ENCODE measurements at regions of chr2 and their contacts with region 1.

Region 1: DNA sequence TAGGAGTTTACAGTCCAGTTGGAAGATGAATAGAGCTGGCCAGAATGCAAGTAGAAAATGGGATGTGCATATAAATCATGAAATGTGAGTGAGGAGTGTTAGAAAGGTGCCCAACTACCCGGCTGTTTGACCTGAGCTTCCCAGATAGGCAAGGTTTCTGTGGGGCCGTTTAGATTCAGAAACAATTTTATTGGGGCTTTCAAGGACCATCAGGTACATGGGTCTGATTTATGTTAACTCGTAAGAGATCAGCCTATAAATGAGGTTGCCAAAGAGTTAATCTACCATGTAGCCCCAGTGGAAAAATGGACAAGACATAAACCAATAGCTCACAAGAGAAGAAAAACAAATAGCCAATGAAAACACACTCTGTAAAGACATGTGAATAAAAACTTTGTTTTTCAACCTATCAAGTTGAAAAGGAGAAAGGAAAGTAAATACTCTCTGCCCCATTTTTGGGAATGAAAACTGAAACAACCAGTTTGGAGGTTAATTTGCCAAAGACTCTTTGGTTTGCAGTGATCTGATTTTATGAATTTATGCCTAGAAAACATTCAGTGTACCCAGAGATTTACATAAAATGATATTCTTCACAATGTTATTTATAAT is 77.4 kb downstream of the TMEM247 start:
- DNase-seq: no peak
- ATAC-seq: no peak
- H3K4me3 ChIP-seq: no peak overlapping the region
- H3K27ac ChIP-seq: no peak overlapping the region
- H3K4me1 ChIP-seq: no peaks in the 10 kb centered on the region
- H3K27me3 ChIP-seq: no peaks in the 10 kb centered on the region
- CTCF ChIP-seq: no peak

Region 2: DNA sequence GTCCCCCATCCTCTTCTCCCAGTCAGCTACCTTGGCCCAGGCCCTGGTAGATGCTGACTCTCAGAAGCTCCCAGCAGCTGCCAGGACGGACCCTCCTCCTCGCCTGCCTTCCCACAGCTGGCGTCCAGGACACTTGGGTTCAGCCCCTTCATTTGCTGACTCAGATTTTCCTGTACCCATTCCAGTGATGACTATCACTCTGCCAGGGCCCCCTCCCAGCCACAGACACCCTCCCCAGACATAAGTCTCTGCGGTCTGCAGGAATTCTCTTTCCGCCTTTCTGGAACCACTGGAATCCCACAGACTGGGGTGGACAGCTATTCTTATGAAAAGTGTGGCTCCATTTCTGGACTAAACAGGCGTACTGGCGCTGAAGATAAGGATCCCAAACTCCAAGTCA is 519.9 kb before region 1 on chr2:
- CTCF ChIA-PET with region 1: no interaction called
- POLR2A ChIA-PET with region 1: interaction called, 11 read pairs
- in situ Hi-C with region 1: no loop called
- intact Hi-C with region 1: no loop called
- DNase-seq: no peak
- ATAC-seq: no peak
- H3K4me3 ChIP-seq: no peak overlapping the region
- H3K27ac ChIP-seq: no peak overlapping the region
- H3K4me1 ChIP-seq: peaks cover 1% of the 10 kb centered on the region; the same call in 1 of the 2 replicates
- H3K27me3 ChIP-seq: no peaks in the 10 kb centered on the region
- CTCF ChIP-seq: no peak

Region 3: DNA sequence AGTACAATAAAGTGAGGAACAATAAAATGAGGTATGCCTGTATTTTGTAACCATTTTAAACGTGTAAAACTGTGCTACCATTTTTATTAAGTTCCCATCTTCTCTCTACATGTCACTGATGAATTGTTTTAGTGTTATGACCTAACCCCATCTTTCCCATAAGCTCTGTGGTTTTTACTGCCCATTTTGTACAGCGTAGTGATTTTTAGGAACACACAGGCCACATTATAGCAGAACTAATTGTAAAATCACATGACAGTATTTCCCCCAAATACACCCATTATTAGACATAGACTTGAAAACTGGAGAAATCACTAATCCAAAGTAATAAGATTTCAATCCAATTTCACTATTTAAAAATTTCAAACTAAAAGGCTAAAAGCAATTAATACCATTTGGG is 53.2 kb after region 1 on chr2:
- CTCF ChIA-PET with region 1: no interaction called
- POLR2A ChIA-PET with region 1: no interaction called
- in situ Hi-C with region 1: no loop called
- intact Hi-C with region 1: no loop called
- DNase-seq: no peak
- ATAC-seq: no peak
- H3K4me3 ChIP-seq: no peak overlapping the region
- H3K27ac ChIP-seq: no peak overlapping the region
- H3K4me1 ChIP-seq: no peaks in the 10 kb centered on the region
- H3K27me3 ChIP-seq: no peaks in the 10 kb centered on the region
- CTCF ChIP-seq: no peak

Region 4: GRCh38 chr2:46645681-46646162 is 88.9 kb after region 1 on chr2:
- CTCF ChIA-PET with region 1: no interaction called
- POLR2A ChIA-PET with region 1: no interaction called
- in situ Hi-C with region 1: no loop called
- intact Hi-C with region 1: no loop called
- DNase-seq: no peak
- ATAC-seq: no peak
- H3K4me3 ChIP-seq: no peak overlapping the region
- H3K27ac ChIP-seq: no peak overlapping the region
- H3K4me1 ChIP-seq: no peaks in the 10 kb centered on the region
- H3K27me3 ChIP-seq: no peaks in the 10 kb centered on the region
- CTCF ChIP-seq: no peak

Region 5: DNA sequence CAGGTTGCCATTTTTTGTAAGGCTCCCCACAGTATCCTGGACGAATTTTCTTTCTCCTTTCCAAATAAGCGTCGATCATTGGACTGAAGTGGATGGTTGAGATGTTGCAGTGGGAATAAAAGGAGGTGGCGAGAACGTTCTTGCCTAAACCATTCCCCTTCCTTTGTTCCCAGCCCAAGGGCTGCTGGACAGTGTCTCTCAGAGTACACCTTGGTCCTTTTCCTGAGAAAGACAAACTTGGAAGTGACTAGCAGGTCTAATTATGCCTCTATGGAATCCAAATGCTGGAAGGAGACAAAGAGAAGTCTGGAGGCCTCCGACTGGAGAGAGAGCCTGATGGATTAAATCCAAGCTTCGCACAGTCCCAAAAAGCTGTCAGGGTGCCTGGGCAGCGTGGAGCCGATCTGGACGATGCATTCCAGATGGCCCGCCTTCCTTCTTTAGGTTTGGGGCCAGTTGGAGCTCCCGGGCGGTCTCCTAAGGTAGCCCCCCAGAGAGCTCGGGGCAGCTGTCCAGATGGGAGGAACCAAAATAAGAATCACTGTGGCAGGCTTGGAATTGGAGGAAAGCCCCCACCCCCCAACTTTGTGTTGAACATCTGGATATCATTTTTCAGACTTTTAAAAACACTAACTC is 109.4 kb after region 1 on chr2:
- CTCF ChIA-PET with region 1: no interaction called
- POLR2A ChIA-PET with region 1: no interaction called
- in situ Hi-C with region 1: no loop called
- intact Hi-C with region 1: no loop called
- DNase-seq: no peak
- ATAC-seq: no peak
- H3K4me3 ChIP-seq: no peak overlapping the region
- H3K27ac ChIP-seq: no peak overlapping the region
- H3K4me1 ChIP-seq: no peaks in the 10 kb centered on the region
- H3K27me3 ChIP-seq: peaks cover 5% of the 10 kb centered on the region
- CTCF ChIP-seq: no peak

Measured in Panc1 (cell line).